Ovary (tissue), 10 donors: ENCODE measurements at regions of chr17 and their contacts with region 1.

Region 1: GRCh38 chr17:68759343-68760132 is 158.4 kb upstream of the FAM20A start:
- DNase-seq: peak; percentile 86 to 94 (median 89)
- H3K4me3 ChIP-seq: peak overlapping the region; percentile 14
- H3K27ac ChIP-seq: peak overlapping the region in 1 of 2 donors; percentile 73
- H3K4me1 ChIP-seq: peaks cover 2% of the 10 kb centered on the region
- H3K27me3 ChIP-seq: no peaks in the 10 kb centered on the region
- CTCF ChIP-seq: peak; percentile 48 to 94 (median 92)
- EP300 ChIP-seq: no peak
- POLR2A ChIP-seq: no peak

Region 2: DNA sequence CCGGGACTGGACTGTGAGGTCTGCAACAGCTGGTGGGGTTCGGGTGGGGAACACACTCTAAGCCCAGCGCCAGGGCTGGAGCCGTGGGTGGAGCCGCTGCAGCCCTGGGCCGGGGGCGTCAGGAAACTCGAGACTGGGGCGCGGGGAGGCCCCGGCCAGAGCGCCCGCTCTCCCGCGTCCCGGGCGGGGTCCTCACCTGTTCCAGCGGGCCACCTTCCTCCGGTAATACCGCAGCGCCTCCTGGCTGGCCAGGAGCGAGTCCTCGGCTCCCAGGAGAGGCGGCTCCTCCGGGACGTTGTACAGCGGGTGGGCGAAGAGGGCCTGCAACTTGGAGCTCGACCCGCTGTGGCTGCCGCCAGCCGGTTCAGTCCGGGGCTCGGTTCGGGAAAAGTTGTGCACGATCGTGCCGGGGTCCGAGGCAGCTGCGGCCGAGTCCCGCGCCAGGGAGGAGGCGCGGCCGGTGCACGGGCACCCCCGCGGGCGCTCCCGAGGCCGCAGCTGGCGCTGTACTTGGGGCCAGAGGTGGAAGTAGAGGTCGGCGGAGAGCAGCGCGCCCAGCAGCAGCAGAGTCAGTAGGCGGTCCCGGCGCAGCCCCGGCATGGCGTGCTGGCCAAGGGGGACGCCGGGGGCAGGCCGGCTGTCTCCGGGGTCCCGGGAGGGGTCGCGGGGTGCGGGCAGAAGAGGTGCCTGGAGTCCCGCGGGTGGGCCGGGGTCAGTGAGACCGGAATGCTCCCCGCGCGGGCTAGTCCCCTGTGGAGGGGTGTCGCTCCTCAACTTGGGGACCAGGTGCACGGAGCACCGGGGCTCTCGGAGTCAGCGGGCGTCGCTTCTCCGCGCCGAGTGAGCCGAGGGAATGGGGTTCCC is 159.2 kb before region 1 on chr17:
- intact Hi-C with region 1: loop called in 1 of 4 experiments (anchors 10 kb)
- DNase-seq: peak; percentile 67 to 74 (median 69)
- H3K4me3 ChIP-seq: peak overlapping the region; percentile 70
- H3K27ac ChIP-seq: peak overlapping the region; percentile 54 to 63
- H3K4me1 ChIP-seq: peaks cover 5% of the 10 kb centered on the region
- H3K27me3 ChIP-seq: no peaks in the 10 kb centered on the region
- CTCF ChIP-seq: peak; percentile 15 to 50 (median 43)
- EP300 ChIP-seq: no peak
- POLR2A ChIP-seq: no peak